Activated B cell treated with CpG ODN at 0.5 μM for 24 hours (primary cell): ENCODE measurements at regions of chrX and their contacts with region 1.

Region 1: GRCh38 chrX:20205927-20206708 is 60.6 kb downstream of the RPS6KA3 start:
- DNase-seq: no peak
- ATAC-seq: no peak
- H3K4me3 Mint-ChIP-seq: no peak overlapping the region
- H3K27ac Mint-ChIP-seq: no peak overlapping the region
- H3K4me1 Mint-ChIP-seq: peaks cover 20% of the 10 kb centered on the region
- H3K27me3 Mint-ChIP-seq: no peaks in the 10 kb centered on the region
- CTCF ChIP-seq: no peak

Region 2: GRCh38 chrX:20147561-20147960 is 58.6 kb before region 1 on chrX:
- CTCF ChIA-PET with region 1: no interaction called
- POLR2A ChIA-PET with region 1: no interaction called
- intact Hi-C with region 1: no loop called
- DNase-seq: no peak
- ATAC-seq: no peak
- H3K4me3 Mint-ChIP-seq: no peak overlapping the region
- H3K27ac Mint-ChIP-seq: no peak overlapping the region
- H3K4me1 Mint-ChIP-seq: peaks cover 17% of the 10 kb centered on the region
- H3K27me3 Mint-ChIP-seq: no peaks in the 10 kb centered on the region
- CTCF ChIP-seq: no peak

Region 3: DNA sequence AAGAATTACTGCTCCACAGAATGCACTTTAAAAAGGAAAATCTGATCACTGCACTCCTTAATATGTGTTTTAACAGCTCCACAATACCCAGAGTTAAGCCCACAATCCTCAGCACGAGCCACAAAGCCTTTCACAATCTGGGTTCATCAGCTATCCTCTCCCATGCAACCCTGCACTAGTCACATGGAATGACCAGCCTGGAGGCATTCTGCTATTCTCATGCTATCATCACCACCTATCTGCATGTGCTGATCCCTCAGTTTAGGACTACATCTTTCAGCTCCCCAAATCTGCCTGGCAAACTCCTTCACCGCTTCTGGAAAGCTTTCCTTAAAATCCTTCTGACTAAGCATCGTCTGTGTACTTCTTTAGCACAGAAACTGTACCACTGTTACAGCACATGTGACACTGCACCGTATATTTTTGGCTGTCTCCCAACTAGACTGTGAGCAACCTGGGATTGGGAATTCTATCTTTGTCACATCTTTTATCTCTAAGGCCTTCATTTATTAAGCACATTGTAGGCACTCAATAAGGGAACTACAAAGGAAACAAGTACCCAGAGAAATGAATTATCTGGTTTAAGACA is 46.2 kb before region 1 on chrX:
- CTCF ChIA-PET with region 1: no interaction called
- POLR2A ChIA-PET with region 1: interaction called, 10 read pairs
- intact Hi-C with region 1: no loop called
- DNase-seq: no peak
- ATAC-seq: no peak
- H3K4me3 Mint-ChIP-seq: no peak overlapping the region
- H3K27ac Mint-ChIP-seq: no peak overlapping the region
- H3K4me1 Mint-ChIP-seq: no peaks in the 10 kb centered on the region
- H3K27me3 Mint-ChIP-seq: no peaks in the 10 kb centered on the region
- CTCF ChIP-seq: no peak

Region 4: GRCh38 chrX:20244931-20245330 is 38.8 kb after region 1 on chrX:
- CTCF ChIA-PET with region 1: no interaction called
- POLR2A ChIA-PET with region 1: no interaction called
- intact Hi-C with region 1: loop called (anchors 5 kb)
- DNase-seq: no peak
- ATAC-seq: no peak
- H3K4me3 Mint-ChIP-seq: no peak overlapping the region
- H3K27ac Mint-ChIP-seq: no peak overlapping the region
- H3K4me1 Mint-ChIP-seq: peaks cover 21% of the 10 kb centered on the region
- H3K27me3 Mint-ChIP-seq: no peaks in the 10 kb centered on the region
- CTCF ChIP-seq: no peak

Region 5: DNA sequence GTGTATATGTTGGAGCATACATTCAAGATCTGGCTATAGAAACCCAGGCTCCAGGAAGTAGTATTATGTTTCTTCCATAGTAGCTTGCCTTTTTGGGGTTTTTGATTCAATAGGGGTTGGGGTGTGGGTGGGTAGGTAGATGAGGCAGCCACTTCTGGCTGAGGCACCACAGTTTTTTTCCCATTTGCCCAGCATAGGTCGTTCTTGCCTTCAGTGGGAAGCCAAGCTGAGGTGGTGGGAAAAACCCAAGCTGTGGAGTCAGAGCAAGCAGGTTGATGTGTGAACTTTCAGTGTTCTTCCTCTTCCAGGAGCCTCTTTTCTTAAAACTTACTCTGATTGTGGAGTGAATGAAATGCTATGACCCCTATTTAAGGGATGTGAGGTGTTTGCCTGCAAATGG is 127.6 kb after region 1 on chrX:
- CTCF ChIA-PET with region 1: no interaction called
- POLR2A ChIA-PET with region 1: no interaction called
- intact Hi-C with region 1: no loop called
- DNase-seq: no peak
- ATAC-seq: no peak
- H3K4me3 Mint-ChIP-seq: no peak overlapping the region
- H3K27ac Mint-ChIP-seq: no peak overlapping the region
- H3K4me1 Mint-ChIP-seq: no peaks in the 10 kb centered on the region
- H3K27me3 Mint-ChIP-seq: no peaks in the 10 kb centered on the region
- CTCF ChIP-seq: no peak